Mammary epithelial cell (primary cell): ENCODE measurements at regions of chr13 and their contacts with region 1.

Region 1: DNA sequence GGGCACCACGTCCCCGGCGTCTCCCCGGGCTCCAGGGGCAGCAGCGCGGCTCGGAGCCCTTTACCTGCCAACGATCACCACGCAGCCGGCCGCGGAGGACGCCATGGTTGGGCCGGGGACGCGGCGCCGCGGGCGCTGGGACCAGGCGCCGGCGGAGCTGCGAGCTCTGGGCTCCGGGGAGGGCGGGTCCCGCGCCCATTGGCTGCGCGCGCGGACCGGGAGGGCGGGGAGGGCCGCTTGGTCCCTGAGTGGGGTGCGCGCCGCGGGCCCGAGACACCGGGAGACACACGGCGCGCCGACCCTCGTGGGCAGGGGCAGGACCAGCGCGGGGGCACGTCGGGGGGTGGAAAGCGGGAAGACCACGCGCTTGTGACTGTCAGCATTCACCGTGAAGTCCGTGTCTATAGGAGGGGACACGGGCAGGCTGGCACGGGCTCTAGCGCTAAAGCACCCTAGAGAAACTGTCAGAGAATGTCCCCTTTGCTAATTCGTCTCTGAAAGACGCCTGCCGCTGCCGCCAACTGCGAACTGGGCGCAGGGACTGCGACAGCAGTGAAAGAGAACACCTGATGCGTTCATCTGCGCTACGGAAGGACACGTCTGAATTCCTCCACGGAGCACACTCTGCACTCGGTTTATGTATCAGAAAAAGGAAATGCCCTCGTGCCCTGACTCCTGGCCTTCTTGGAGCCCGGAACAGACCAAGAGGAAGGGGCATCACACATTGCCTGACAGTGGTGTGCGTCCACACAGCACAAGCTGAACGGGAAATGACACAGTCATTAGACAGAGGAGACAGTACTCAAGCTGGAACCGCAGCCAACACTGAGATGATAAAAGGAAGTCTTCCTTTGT is at the start of gene CRYL1:
- DNase-seq: peak; percentile 68
- H3K4me3 ChIP-seq: peak within 1 kb of the TSS; percentile 51 to 90 (median 69)
- H3K27ac ChIP-seq: peak within 1 kb of the TSS; percentile 21
- H3K4me1 ChIP-seq: peaks cover 13% of the 10 kb centered on the region
- H3K27me3 ChIP-seq: no peaks in the 10 kb centered on the region
- CTCF ChIP-seq: no peak
- total RNA-seq, gene CRYL1: 17.0 to 18.5 TPM

Region 2: DNA sequence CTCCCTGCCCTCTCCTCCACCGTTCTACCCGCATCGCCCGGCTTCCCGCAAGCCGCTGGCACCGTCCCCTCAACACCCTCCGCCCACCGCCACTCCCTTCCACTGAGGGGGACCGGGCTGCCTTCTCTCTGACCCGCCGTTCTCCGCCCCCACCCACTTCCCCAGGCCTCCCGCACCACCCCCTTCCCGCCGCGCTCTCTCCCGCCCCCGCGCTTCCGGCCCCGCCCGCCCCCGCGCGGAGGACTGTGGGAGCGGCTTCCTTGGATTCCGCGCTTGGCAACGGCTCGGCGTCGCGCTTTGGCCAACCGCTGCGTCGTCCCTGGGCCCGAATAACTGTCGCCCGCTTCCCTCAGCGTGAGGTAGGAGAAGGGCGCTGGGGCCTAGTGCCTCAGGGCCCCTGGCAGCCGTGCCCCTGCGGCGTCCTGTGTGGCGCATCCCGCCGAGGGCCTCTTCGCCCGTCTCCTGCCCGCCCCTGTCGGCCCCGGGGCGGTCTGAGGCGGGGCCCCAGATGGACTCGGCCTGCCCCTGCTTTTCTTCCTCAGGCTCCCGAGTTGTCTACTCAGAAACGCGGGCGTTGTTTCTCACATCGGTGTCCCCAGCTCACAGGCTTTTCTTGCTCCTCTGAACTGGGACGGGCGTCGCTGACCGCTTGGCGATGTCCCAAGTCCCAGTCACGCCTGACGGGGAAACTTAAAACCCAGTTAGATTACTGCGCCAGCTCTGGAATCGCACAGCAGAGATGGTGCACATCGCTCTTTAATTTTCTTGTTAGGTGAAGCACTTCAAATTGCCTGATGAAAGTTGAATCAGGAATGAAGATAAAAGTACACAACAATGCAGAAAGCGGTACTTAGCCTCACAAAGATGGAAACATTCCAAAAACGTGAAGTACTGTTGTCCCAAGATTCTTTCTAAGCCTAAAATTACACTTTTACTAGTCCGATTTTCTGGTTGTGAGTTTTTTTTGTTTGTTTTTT is 41.3 kb after region 1 on chr13 and contains the start of gene IFT88:
- CTCF ChIA-PET with region 1: no interaction called
- dilution Hi-C with region 1: no loop called
- in situ Hi-C with region 1: no loop called
- intact Hi-C with region 1: loop called (anchors 2 kb)
- DNase-seq: peak; percentile 83
- H3K4me3 ChIP-seq: peak within 1 kb of the TSS; percentile 71 to 89 (median 89)
- H3K27ac ChIP-seq: peak within 1 kb of the TSS; percentile 89
- H3K4me1 ChIP-seq: peaks cover 8% of the 10 kb centered on the region
- H3K27me3 ChIP-seq: no peaks in the 10 kb centered on the region
- CTCF ChIP-seq: no peak
- total RNA-seq, gene IFT88: 10.3 to 11.2 TPM

Region 3: GRCh38 chr13:20773194-20774080 is 247.5 kb after region 1 on chr13 and contains the start of gene EEF1AKMT1:
- CTCF ChIA-PET with region 1: no interaction called
- dilution Hi-C with region 1: no loop called
- in situ Hi-C with region 1: no loop called
- intact Hi-C with region 1: loop called (anchors 10 kb)
- DNase-seq: peak; percentile 85
- H3K4me3 ChIP-seq: peak within 1 kb of the TSS; percentile 74 to 79 (median 78)
- H3K27ac ChIP-seq: peak within 1 kb of the TSS; percentile 82
- H3K4me1 ChIP-seq: peaks cover 9% of the 10 kb centered on the region
- H3K27me3 ChIP-seq: no peaks in the 10 kb centered on the region
- CTCF ChIP-seq: no peak
- total RNA-seq, gene EEF1AKMT1: 5.3 to 7.8 TPM